ENCODE measurements at regions of chr2 and their contacts with region 1.

Region 1: GRCh38 chr2:224284134-224284946 is 117.6 kb downstream of the FAM124B start:
- DNase-seq: peak; percentile 10 to 59
- ATAC-seq: peak; percentile 61 to 83
- H3K4me3 ChIP-seq: no peak overlapping the region
- H3K27ac ChIP-seq: peak overlapping the region in 1 of 2 experiments; percentile 18; a peak in 2 of 6 replicates
- H3K4me1 ChIP-seq: no peaks in the 10 kb centered on the region
- CTCF ChIP-seq: peak; percentile 100
- EP300 ChIP-seq: no peak
- POLR2A ChIP-seq: no peak
- RAD21 ChIP-seq: peak; percentile 91 to 99

Region 2: GRCh38 chr2:223970343-223971128 is 313.8 kb before region 1 on chr2:
- CTCF ChIA-PET with region 1: interaction called, 148 read pairs
- POLR2A ChIA-PET with region 1: interaction called, 4 read pairs
- DNase-seq: peak in 1 of 2 experiments; percentile 64
- ATAC-seq: peak; percentile 74 to 83; a peak in 5 of 6 replicates
- H3K4me3 ChIP-seq: no peak overlapping the region
- H3K27ac ChIP-seq: no peak overlapping the region
- H3K4me1 ChIP-seq: no peaks in the 10 kb centered on the region
- CTCF ChIP-seq: peak; percentile 96
- EP300 ChIP-seq: no peak
- POLR2A ChIP-seq: no peak
- RAD21 ChIP-seq: peak; percentile 93 to 96

Region 3: DNA sequence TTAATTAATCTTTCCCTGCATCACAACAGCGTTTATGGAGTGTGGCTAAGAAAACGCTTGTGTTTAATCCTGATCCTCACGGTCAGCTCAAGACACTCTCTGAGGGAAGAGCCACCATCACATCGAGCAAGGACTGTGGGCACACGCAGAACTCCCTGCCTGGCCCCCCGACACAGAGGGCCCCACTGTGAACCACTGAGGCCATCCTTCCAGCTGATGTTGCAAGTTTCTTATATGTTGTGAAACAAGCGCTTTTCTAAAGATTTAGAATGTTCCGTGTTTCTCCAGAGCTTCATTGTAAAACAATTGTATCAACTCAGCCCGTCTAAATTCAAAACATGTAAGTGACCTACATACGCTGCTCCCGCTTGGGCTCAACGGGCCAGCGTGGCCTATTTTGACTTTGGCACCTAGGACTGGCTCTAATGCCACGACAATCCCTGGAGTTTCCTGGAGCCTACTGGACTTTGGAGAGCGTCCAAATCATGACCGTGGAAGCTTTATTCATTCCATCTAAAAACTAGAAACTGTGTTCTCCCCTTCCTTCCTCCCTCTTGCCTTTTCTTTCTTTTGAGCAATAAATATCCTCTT is 280.1 kb before region 1 on chr2:
- CTCF ChIA-PET with region 1: interaction called, 360 read pairs
- POLR2A ChIA-PET with region 1: no interaction called
- DNase-seq: no peak
- ATAC-seq: no peak
- H3K4me3 ChIP-seq: no peak overlapping the region
- H3K27ac ChIP-seq: no peak overlapping the region
- H3K4me1 ChIP-seq: peaks cover 14% of the 10 kb centered on the region
- CTCF ChIP-seq: no peak
- EP300 ChIP-seq: no peak
- POLR2A ChIP-seq: no peak
- RAD21 ChIP-seq: no peak

Region 4: GRCh38 chr2:224062481-224063297 is 221.7 kb before region 1 on chr2:
- CTCF ChIA-PET with region 1: interaction called, 18 read pairs
- POLR2A ChIA-PET with region 1: no interaction called
- DNase-seq: no peak
- ATAC-seq: no peak
- H3K4me3 ChIP-seq: no peak overlapping the region
- H3K27ac ChIP-seq: no peak overlapping the region
- H3K4me1 ChIP-seq: no peaks in the 10 kb centered on the region
- CTCF ChIP-seq: no peak
- EP300 ChIP-seq: no peak
- POLR2A ChIP-seq: no peak
- RAD21 ChIP-seq: 0 out of 5 replicates have a peak, but pooled peaks of 1 of the 2 experiments have one; percentile 11

Region 5: GRCh38 chr2:224173933-224174332 is 110.4 kb before region 1 on chr2:
- CTCF ChIA-PET with region 1: interaction called, 11 read pairs
- POLR2A ChIA-PET with region 1: no interaction called
- DNase-seq: no peak
- ATAC-seq: no peak
- H3K4me3 ChIP-seq: no peak overlapping the region
- H3K27ac ChIP-seq: no peak overlapping the region
- H3K4me1 ChIP-seq: no peaks in the 10 kb centered on the region
- CTCF ChIP-seq: no peak
- EP300 ChIP-seq: no peak
- POLR2A ChIP-seq: no peak
- RAD21 ChIP-seq: no peak

Region 6: GRCh38 chr2:224875841-224876240 is 591.5 kb after region 1 on chr2:
- CTCF ChIA-PET with region 1: no interaction called
- POLR2A ChIA-PET with region 1: no interaction called
- DNase-seq: no peak
- ATAC-seq: no peak
- H3K4me3 ChIP-seq: no peak overlapping the region
- H3K27ac ChIP-seq: no peak overlapping the region
- H3K4me1 ChIP-seq: peaks cover 3% of the 10 kb centered on the region
- CTCF ChIP-seq: no peak
- EP300 ChIP-seq: no peak
- POLR2A ChIP-seq: no peak
- RAD21 ChIP-seq: no peak

Measured in A549 (cell line).